ENCODE measurements at regions of chr12 and their contacts with region 1.

Region 1: GRCh38 chr12:131923260-131923659 is 5.8 kb upstream of the PUS1 start:
- DNase-seq: peak; percentile 68
- ATAC-seq: peak; percentile 83
- H3K4me3 Mint-ChIP-seq: peak overlapping the region; percentile 55
- H3K27ac Mint-ChIP-seq: peak overlapping the region; percentile 71
- H3K4me1 Mint-ChIP-seq: peaks cover 37% of the 10 kb centered on the region
- H3K27me3 Mint-ChIP-seq: no peaks in the 10 kb centered on the region
- CTCF ChIP-seq: no peak

Region 2: DNA sequence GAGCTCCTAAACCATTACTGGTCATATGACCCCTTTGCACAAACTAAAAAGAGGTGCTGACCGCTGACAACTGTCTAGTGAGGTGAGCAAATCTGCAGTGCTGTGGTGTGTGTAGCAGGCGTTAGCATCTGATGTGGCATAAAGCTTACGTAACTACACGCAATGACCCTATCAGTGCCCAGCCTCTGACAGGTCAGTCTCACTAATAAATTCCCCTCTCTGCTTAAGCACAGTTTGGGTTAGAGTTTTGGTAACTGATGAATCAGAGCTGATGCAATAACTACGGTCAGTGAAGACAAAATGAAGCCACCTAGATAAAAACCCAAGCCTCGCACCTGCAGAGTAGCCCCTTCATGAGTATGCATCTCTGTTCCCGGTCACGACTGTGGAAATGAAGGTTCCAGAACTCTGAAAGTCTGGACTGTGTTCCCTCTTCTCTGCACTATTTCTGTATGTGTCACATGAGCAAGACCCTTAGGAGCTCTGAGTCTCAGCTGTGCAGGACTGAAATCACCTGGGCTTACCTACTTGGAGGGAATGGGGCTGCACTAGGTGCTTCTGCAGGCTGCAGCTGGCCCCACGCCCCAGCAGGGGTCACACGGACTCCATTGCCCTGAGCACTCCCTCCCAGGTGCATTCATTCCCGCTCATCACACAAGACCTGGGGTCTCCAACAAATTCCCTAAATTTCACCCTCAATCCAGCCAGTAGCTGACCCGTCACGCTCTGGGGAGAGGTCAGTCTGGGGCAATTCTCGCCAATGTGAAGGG is 1261.6 kb before region 1 on chr12:
- CTCF ChIA-PET with region 1: no interaction called
- POLR2A ChIA-PET with region 1: no interaction called
- intact Hi-C with region 1: no loop called
- DNase-seq: no peak
- ATAC-seq: no peak
- H3K4me3 Mint-ChIP-seq: no peak overlapping the region
- H3K27ac Mint-ChIP-seq: no peak overlapping the region
- H3K4me1 Mint-ChIP-seq: no peaks in the 10 kb centered on the region
- H3K27me3 Mint-ChIP-seq: no peaks in the 10 kb centered on the region
- CTCF ChIP-seq: no peak

Region 3: GRCh38 chr12:131894313-131894860 is 28.9 kb before region 1 on chr12 and contains the start of gene ULK1:
- CTCF ChIA-PET with region 1: no interaction called
- POLR2A ChIA-PET with region 1: interaction called, 14 read pairs
- intact Hi-C with region 1: loop called (anchors 1 kb)
- DNase-seq: peak; percentile 97
- ATAC-seq: peak; percentile 86
- H3K4me3 Mint-ChIP-seq: peak within 1 kb of the TSS; percentile 82
- H3K27ac Mint-ChIP-seq: peak within 1 kb of the TSS; percentile 46
- H3K4me1 Mint-ChIP-seq: peaks cover 22% of the 10 kb centered on the region
- H3K27me3 Mint-ChIP-seq: peaks cover 3% of the 10 kb centered on the region
- CTCF ChIP-seq: no peak
- total RNA-seq, gene ULK1: 20.1 and 27.0 TPM in 2 replicates